ENCODE measurements at regions of chr4 and their contacts with region 1.

Region 1: DNA sequence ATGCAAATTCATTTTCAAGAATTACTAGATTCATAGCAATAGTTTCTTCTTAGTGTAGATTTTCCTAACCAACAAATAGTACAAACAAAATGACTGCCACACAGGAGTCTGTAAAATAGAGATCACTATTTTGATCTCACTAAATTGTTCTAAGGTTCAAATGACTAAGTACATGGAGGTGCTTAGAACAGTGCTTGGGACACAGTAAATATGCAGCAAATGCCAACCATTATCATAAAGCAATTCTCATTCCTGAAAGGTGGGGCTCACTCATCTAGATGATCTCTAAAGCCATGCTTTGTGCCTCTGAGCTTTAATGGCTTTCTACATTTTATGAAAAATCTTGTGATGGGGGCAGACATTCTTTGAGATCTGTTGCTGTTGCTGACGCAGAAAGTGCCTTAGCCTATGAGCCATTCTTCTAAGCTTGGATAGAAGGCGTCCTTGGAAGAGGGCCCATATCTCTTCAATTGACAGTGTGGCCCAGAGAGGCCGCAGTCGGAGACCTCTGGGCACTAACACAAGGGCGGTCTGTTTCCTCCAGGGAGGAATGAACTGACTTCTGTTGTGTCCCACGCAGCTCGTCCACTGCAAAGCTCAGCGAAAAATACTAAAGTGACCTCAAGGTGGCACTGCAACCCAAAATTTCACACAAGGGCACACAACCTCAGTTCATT is 23.5 kb downstream of the TLR10 start:
- DNase-seq: peak; percentile 77
- ATAC-seq: peak; percentile 51
- H3K4me3 ChIP-seq: no peak overlapping the region
- H3K27ac ChIP-seq: peak overlapping the region; percentile 95; the same call in 1 of the 2 replicates
- H3K4me1 ChIP-seq: peaks cover 42% of the 10 kb centered on the region
- H3K27me3 ChIP-seq: no peaks in the 10 kb centered on the region
- CTCF ChIP-seq: peak; percentile 46 to 75 (median 74)
- EP300 ChIP-seq: no peak
- POLR2A ChIP-seq: no peak
- RAD21 ChIP-seq: peak; percentile 93

Region 2: DNA sequence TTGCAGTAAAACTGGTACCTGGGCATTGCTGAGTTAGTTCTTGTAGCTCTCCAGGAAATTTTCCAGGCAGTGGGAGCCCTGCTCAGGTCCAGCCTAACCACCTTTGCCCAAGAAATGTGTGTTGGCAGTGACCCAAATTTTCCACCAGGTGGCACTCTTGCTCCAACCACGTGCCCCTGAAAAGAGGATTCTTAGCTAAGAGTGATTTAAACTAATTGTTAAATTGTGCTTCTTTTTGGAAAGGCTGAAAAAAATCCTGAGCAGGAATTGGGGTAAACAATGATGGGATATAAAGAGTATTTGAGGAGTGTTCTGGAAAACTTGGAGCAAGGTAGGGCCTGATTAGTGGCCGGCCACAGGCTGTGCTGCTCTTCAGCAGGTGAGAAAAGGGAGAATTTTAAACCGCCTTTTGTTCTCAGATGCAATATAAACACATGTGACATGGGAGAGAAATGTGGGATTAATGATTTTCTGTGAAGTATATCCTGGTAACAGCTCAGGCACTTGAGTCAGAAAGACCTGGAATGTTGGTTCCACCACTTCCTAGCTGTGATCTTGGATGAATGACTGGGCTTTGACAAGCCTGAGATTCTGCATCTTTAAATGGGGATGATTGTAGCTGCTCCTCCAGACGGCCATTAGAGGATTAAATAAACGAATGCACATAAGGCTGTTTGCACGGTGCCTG is 579.4 kb before region 1 on chr4:
- CTCF ChIA-PET with region 1: interaction called, 38 read pairs
- POLR2A ChIA-PET with region 1: no interaction called
- RAD21 ChIA-PET with region 1: interaction called, 36 read pairs
- SMC1A ChIA-PET with region 1: interaction called, 19 read pairs
- in situ Hi-C with region 1: no loop called
- intact Hi-C with region 1: no loop called
- DNase-seq: peak; percentile 56
- ATAC-seq: peak; percentile 85
- H3K4me3 ChIP-seq: no peak overlapping the region
- H3K27ac ChIP-seq: no peak overlapping the region
- H3K4me1 ChIP-seq: peaks cover 39% of the 10 kb centered on the region
- H3K27me3 ChIP-seq: no peaks in the 10 kb centered on the region
- CTCF ChIP-seq: peak; percentile 76 to 94 (median 88)
- EP300 ChIP-seq: no peak
- POLR2A ChIP-seq: no peak
- RAD21 ChIP-seq: peak; percentile 98

Region 3: DNA sequence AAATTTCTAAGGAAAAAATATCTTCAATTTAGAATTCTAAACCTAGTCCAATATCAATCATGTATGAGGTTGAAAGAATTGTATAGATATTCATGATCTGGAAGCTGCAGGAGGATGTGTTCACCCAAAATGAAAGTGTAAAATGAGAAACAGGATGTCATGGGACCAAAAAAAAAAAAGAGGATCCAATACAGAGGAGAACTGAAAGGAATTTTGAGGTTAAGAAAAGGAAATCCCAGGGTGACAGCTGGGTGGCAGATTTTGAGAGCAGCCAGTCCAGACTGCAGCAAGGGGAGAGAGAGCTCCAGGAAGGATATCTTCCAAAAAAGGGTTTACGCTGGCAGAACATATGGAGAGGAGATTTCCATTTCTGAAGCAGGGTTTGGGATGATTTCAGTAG is 15.4 kb before region 1 on chr4:
- CTCF ChIA-PET with region 1: interaction called, 21 read pairs
- POLR2A ChIA-PET with region 1: no interaction called
- RAD21 ChIA-PET with region 1: interaction called, 6 read pairs
- SMC1A ChIA-PET with region 1: interaction called, 17 read pairs
- in situ Hi-C with region 1: no loop called
- intact Hi-C with region 1: no loop called
- DNase-seq: no peak
- ATAC-seq: peak; percentile 55
- H3K4me3 ChIP-seq: peak overlapping the region; percentile 15; the same call in 1 of the 2 replicates
- H3K27ac ChIP-seq: no peak overlapping the region
- H3K4me1 ChIP-seq: peaks cover 6% of the 10 kb centered on the region; the same call in 1 of the 2 replicates
- H3K27me3 ChIP-seq: no peaks in the 10 kb centered on the region
- CTCF ChIP-seq: no peak
- EP300 ChIP-seq: no peak
- POLR2A ChIP-seq: no peak
- RAD21 ChIP-seq: no peak

Region 4: DNA sequence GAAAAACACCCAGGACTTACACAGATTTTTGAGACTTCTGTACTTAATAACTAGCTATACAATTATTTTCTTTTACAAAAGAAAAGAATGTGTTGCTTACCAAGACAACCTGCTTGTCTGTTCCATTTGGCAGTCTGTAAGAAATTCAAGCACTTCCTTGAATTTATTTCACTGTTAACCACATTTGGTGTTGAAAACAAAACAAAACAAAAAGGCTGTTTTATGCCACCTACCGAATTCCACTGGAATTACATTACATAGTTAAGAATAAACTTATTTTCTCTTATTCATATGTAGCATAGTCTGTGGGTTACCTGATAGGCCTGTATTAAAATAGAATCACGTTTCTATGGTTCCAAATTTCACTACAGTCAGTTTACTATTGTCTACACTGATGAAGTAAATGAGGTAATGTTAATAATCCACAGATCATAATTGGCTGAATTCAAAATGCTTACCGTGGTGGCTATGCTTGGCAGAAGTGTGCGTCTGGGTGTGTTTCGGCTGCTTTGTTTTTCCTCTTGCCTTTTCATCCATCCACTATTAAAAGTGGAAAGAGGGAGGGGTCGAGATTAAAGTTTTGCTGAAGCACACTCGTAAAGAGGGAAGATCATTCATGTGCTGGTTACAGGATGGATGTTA is 45.5 kb after region 1 on chr4 and contains the start of gene TLR1:
- CTCF ChIA-PET with region 1: interaction called, 166 read pairs
- POLR2A ChIA-PET with region 1: interaction called, 100 read pairs
- RAD21 ChIA-PET with region 1: interaction called, 216 read pairs
- SMC1A ChIA-PET with region 1: interaction called, 250 read pairs
- in situ Hi-C with region 1: no loop called
- intact Hi-C with region 1: loop called (anchors 1 kb)
- DNase-seq: peak; percentile 62
- ATAC-seq: peak; percentile 67
- H3K4me3 ChIP-seq: peak within 1 kb of the TSS; percentile 41
- H3K27ac ChIP-seq: peak within 1 kb of the TSS; percentile 86
- H3K4me1 ChIP-seq: peaks cover 20% of the 10 kb centered on the region
- H3K27me3 ChIP-seq: no peaks in the 10 kb centered on the region
- CTCF ChIP-seq: peak; percentile 22 to 47 (median 38); a peak in 5 of 6 replicates
- EP300 ChIP-seq: no peak
- POLR2A ChIP-seq: no peak
- RAD21 ChIP-seq: peak; percentile 64
- polyA plus RNA-seq, gene TLR1: 9.3 to 9.5 TPM

Region 5: GRCh38 chr4:38872604-38873006 is 113.4 kb after region 1 on chr4:
- CTCF ChIA-PET with region 1: interaction called, 34 read pairs
- POLR2A ChIA-PET with region 1: no interaction called
- RAD21 ChIA-PET with region 1: interaction called, 18 read pairs
- SMC1A ChIA-PET with region 1: interaction called, 12 read pairs
- in situ Hi-C with region 1: no loop called
- intact Hi-C with region 1: no loop called
- DNase-seq: no peak
- ATAC-seq: no peak
- H3K4me3 ChIP-seq: no peak overlapping the region
- H3K27ac ChIP-seq: no peak overlapping the region
- H3K4me1 ChIP-seq: peaks cover 7% of the 10 kb centered on the region
- H3K27me3 ChIP-seq: no peaks in the 10 kb centered on the region
- CTCF ChIP-seq: no peak
- EP300 ChIP-seq: no peak
- POLR2A ChIP-seq: no peak
- RAD21 ChIP-seq: no peak

Region 6: DNA sequence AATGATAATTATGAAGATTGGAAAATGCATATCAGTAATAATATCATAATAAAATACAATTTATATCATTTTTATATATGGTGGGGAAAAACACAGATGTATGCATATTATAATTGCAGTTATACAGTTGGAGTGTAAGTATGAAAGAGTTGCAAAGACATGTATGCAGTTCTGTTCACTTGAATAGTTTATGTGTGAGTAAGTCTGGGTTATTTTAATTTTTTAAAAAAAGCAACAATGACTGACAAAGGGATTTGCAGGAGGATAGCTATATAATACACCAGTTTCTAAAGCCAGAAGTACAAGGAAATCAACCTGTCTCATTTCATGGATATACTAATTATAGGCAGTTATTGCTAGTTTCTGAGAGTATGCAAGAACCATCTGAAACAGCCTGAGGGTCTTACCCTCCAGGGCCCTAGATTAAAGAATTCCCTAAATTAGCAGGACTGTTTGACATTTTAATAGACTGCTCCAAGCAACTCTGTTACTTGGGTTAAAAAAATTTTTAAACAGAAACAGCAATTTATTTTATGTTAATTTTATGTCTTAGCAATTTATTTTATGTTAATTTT is 148.5 kb after region 1 on chr4:
- CTCF ChIA-PET with region 1: interaction called, 67 read pairs
- POLR2A ChIA-PET with region 1: interaction called, 3 read pairs
- RAD21 ChIA-PET with region 1: interaction called, 71 read pairs
- SMC1A ChIA-PET with region 1: interaction called, 125 read pairs
- in situ Hi-C with region 1: no loop called
- intact Hi-C with region 1: no loop called
- DNase-seq: no peak
- ATAC-seq: no peak
- H3K4me3 ChIP-seq: no peak overlapping the region
- H3K27ac ChIP-seq: no peak overlapping the region
- H3K4me1 ChIP-seq: no peaks in the 10 kb centered on the region
- H3K27me3 ChIP-seq: no peaks in the 10 kb centered on the region
- CTCF ChIP-seq: no peak
- EP300 ChIP-seq: no peak
- POLR2A ChIP-seq: no peak
- RAD21 ChIP-seq: no peak

Region 7: DNA sequence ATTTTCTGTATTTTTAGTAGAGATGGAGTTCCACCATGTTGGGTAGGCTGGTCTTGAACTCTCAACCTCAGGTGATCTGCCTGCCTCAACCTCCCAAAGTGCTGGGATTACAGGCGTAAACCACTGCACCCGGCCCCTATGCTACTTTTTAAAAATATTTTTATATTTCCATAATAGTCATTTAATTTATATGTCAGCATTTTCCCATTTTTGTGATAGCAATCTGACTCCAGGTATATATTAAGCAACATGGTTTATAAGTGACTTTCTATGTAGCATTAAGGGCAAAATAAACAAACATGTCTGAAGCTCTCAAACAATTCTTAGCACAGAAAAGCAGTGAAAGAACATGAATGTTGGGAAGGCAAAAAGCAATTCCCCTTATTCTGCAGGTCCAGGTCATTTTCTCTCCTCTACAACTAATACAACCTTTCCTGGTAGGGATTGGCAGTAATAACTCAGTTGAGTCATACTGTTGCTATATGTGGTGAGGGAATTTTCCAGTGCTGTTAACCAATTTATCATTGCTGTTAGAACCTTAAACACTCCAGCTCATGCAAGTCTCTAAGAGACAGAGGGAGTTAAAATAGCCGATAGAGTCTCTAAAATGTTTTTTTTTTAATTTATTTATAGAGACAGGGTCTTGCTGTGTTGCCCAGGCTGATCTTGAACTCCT is 855.4 kb after region 1 on chr4:
- CTCF ChIA-PET with region 1: no interaction called
- POLR2A ChIA-PET with region 1: no interaction called
- RAD21 ChIA-PET with region 1: interaction called, 10 read pairs
- SMC1A ChIA-PET with region 1: no interaction called
- in situ Hi-C with region 1: no loop called
- intact Hi-C with region 1: no loop called
- DNase-seq: no peak
- ATAC-seq: peak; percentile 50
- H3K4me3 ChIP-seq: peak overlapping the region; percentile 48; the same call in 1 of the 2 replicates
- H3K27ac ChIP-seq: peak overlapping the region; percentile 91
- H3K4me1 ChIP-seq: peaks cover 59% of the 10 kb centered on the region
- H3K27me3 ChIP-seq: no peaks in the 10 kb centered on the region
- CTCF ChIP-seq: no peak
- EP300 ChIP-seq: peak; percentile 53 to 70; a peak in 3 of 4 replicates
- POLR2A ChIP-seq: no peak
- RAD21 ChIP-seq: no peak